ENCODE measurements at regions of chr10 and their contacts with region 1.

Region 1: GRCh38 chr10:15163253-15163828 is 5.2 kb downstream of the NMT2 start:
- DNase-seq: no peak
- CTCF ChIP-seq: no peak

Region 2: GRCh38 chr10:15084502-15084922 is 78.8 kb before region 1 on chr10:
- CTCF ChIA-PET with region 1: no interaction called
- POLR2A ChIA-PET with region 1: no interaction called
- DNase-seq: no peak
- CTCF ChIP-seq: no peak

Region 3: GRCh38 chr10:15150563-15150962 is 12.8 kb before region 1 on chr10:
- CTCF ChIA-PET with region 1: interaction called, 23 read pairs
- POLR2A ChIA-PET with region 1: interaction called, 6 read pairs
- DNase-seq: no peak
- CTCF ChIP-seq: no peak